B cell (primary cell): ENCODE measurements at regions of chr17 and their contacts with region 1.

Region 1: GRCh38 chr17:77088455-77089123 is 52.2 kb upstream of the SEC14L1 start:
- DNase-seq: peak; percentile 93
- ATAC-seq: peak; percentile 94
- H3K4me3 ChIP-seq: peak overlapping the region; percentile 69 to 99 (median 88)
- H3K4me3 Mint-ChIP-seq: peak overlapping the region; percentile 95
- H3K27ac ChIP-seq: peak overlapping the region; percentile 85 to 94
- H3K27ac Mint-ChIP-seq: peak overlapping the region; percentile 97
- H3K4me1 ChIP-seq: peaks cover 31 to 43% of the 10 kb centered on the region in 2 donors
- H3K4me1 Mint-ChIP-seq: peaks cover 44% of the 10 kb centered on the region
- H3K27me3 ChIP-seq: peaks cover 0 to 10% (median 0%) of the 10 kb centered on the region in 4 experiments
- H3K27me3 Mint-ChIP-seq: peaks cover 10% of the 10 kb centered on the region
- CTCF ChIP-seq: peak; percentile 75

Region 2: GRCh38 chr17:76737082-76737675 is 351.4 kb before region 1 on chr17 and contains the start of gene SRSF2:
- CTCF ChIA-PET with region 1: no interaction called
- POLR2A ChIA-PET with region 1: no interaction called
- intact Hi-C with region 1: loop called (anchors 1 kb)
- DNase-seq: peak; percentile 99
- ATAC-seq: peak; percentile 76
- H3K4me3 ChIP-seq: peak within 1 kb of the TSS; percentile 95 to 99 (median 97)
- H3K4me3 Mint-ChIP-seq: peak within 1 kb of the TSS; percentile 97
- H3K27ac ChIP-seq: peak within 1 kb of the TSS; percentile 95 to 97
- H3K27ac Mint-ChIP-seq: peak within 1 kb of the TSS; percentile 99
- H3K4me1 ChIP-seq: peaks cover 35 to 36% of the 10 kb centered on the region in 2 donors
- H3K4me1 Mint-ChIP-seq: peaks cover 53% of the 10 kb centered on the region
- H3K27me3 ChIP-seq: no peaks in the 10 kb centered on the region
- H3K27me3 Mint-ChIP-seq: no peaks in the 10 kb centered on the region
- CTCF ChIP-seq: no peak
- total RNA-seq, gene SRSF2: 356 and 362 TPM in 2 replicates

Region 3: DNA sequence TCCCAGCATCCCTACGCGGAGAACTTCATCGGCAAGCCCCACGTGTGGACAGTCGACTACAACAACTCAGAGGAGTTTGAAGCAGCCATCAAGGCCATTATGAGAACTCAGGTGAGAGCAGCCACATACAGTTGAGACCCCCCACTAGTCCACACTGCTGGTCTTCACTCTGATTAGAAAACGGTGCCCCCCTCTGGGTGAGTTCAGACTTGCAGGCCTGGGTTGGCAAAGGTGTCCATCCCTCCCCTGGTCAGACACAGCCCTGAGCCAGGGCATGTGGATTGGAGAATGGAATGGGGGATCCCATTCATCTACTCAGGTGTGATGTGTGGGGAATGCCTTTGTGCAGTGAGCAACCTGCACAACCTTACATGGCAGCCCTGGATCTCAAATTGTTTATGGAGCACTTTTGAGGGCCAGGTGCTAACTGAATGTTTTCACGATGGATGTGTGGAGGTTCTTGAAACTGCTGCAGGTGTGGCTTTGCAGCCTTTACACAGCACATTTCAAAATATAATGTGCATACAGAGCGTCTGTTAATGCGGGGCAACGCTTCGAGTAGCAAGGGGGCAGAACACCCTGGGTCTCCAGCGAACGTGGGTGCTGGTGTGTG is 147.7 kb before region 1 on chr17:
- CTCF ChIA-PET with region 1: no interaction called
- POLR2A ChIA-PET with region 1: no interaction called
- intact Hi-C with region 1: no loop called
- DNase-seq: no peak
- ATAC-seq: no peak
- H3K4me3 ChIP-seq: no peak overlapping the region
- H3K4me3 Mint-ChIP-seq: no peak overlapping the region
- H3K27ac ChIP-seq: no peak overlapping the region
- H3K27ac Mint-ChIP-seq: no peak overlapping the region
- H3K4me1 ChIP-seq: no peaks in the 10 kb centered on the region
- H3K4me1 Mint-ChIP-seq: no peaks in the 10 kb centered on the region
- H3K27me3 ChIP-seq: peaks cover 0 to 7% (median 1%) of the 10 kb centered on the region in 4 experiments
- H3K27me3 Mint-ChIP-seq: peaks cover 8% of the 10 kb centered on the region
- CTCF ChIP-seq: no peak

Region 4: DNA sequence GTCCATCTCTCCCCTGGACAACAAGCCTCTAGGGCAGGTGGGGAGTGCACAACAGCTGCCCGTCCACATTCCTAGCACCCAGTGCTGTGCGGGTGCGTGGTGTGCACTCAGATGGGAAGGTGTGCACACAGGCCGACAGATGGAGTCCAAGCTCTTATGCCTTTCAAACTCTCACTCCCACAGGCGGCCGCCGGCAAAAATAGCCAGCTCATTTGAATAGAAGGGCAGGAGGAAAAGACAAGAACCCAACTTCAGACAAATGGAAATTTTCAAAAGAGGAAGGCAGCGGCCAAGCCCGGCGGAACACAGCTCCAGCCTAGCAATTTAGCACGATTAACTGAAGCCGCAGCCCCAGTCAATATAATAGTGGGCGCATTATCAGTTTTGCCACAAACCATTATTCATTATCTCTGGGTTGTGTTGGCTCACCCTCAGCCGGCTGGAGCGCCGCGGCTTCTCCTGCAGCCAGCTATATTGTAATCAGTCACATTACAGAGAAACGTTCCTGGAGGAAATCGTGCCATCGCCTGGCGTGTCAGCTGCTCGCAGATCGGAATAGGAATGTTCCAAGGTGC is 51.7 kb before region 1 on chr17:
- CTCF ChIA-PET with region 1: no interaction called
- POLR2A ChIA-PET with region 1: no interaction called
- intact Hi-C with region 1: no loop called
- DNase-seq: peak; percentile 16
- ATAC-seq: peak; percentile 49
- H3K4me3 ChIP-seq: no peak overlapping the region
- H3K4me3 Mint-ChIP-seq: peak overlapping the region; percentile 4
- H3K27ac ChIP-seq: no peak overlapping the region
- H3K27ac Mint-ChIP-seq: no peak overlapping the region
- H3K4me1 ChIP-seq: peaks cover 14 to 16% of the 10 kb centered on the region in 2 donors
- H3K4me1 Mint-ChIP-seq: peaks cover 19% of the 10 kb centered on the region
- H3K27me3 ChIP-seq: peaks cover 0 to 20% (median 3%) of the 10 kb centered on the region in 4 experiments
- H3K27me3 Mint-ChIP-seq: peaks cover 39% of the 10 kb centered on the region
- CTCF ChIP-seq: no peak

Region 5: GRCh38 chr17:77109764-77110359 is 21.3 kb after region 1 on chr17:
- CTCF ChIA-PET with region 1: interaction called, 5 read pairs
- POLR2A ChIA-PET with region 1: no interaction called
- intact Hi-C with region 1: loop called (anchors 2 kb)
- DNase-seq: peak; percentile 58
- ATAC-seq: no peak
- H3K4me3 ChIP-seq: peak overlapping the region in 3 of 5 experiments; percentile 15 to 42 (median 18)
- H3K4me3 Mint-ChIP-seq: peak overlapping the region; percentile 78
- H3K27ac ChIP-seq: no peak overlapping the region
- H3K27ac Mint-ChIP-seq: peak overlapping the region; percentile 17
- H3K4me1 ChIP-seq: peaks cover 25 to 43% of the 10 kb centered on the region in 2 donors
- H3K4me1 Mint-ChIP-seq: peaks cover 47% of the 10 kb centered on the region
- H3K27me3 ChIP-seq: no peaks in the 10 kb centered on the region
- H3K27me3 Mint-ChIP-seq: no peaks in the 10 kb centered on the region
- CTCF ChIP-seq: no peak

Region 6: GRCh38 chr17:77214743-77215142 is 126.2 kb after region 1 on chr17:
- CTCF ChIA-PET with region 1: interaction called, 15 read pairs
- POLR2A ChIA-PET with region 1: no interaction called
- intact Hi-C with region 1: loop called (anchors 5 kb)
- DNase-seq: peak; percentile 24
- ATAC-seq: no peak
- H3K4me3 ChIP-seq: no peak overlapping the region
- H3K4me3 Mint-ChIP-seq: no peak overlapping the region
- H3K27ac ChIP-seq: no peak overlapping the region
- H3K27ac Mint-ChIP-seq: no peak overlapping the region
- H3K4me1 ChIP-seq: peaks cover 40 to 41% of the 10 kb centered on the region in 2 donors
- H3K4me1 Mint-ChIP-seq: peaks cover 53% of the 10 kb centered on the region
- H3K27me3 ChIP-seq: peaks cover 0 to 4% (median 0%) of the 10 kb centered on the region in 4 experiments
- H3K27me3 Mint-ChIP-seq: no peaks in the 10 kb centered on the region
- CTCF ChIP-seq: no peak

Region 7: DNA sequence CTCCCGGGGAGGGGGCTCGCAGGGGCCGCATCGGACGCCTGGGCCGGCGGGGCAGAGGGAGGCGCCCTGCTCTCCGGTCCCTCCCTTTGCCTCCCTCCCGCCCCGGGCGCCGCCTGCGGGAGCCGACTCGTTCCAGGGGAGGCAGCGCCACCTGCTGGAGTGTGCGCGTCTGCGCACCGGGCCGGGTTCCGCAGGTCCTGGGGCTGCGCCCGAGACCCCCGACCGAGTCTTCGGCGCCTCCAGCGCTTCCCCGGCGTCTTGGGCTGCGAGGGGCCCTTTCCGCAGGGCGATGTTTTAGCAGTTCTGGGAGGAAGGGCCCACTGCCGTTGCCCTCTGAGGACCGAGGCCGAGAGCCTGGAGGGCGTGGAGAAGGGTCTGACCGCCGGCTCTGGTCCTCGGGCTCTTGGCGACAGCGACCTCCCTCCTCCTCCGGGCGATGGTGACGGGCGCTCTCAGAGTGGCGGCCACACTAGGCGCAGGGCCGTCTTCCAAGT is 158.5 kb after region 1 on chr17:
- CTCF ChIA-PET with region 1: interaction called, 26 read pairs
- POLR2A ChIA-PET with region 1: no interaction called
- intact Hi-C with region 1: loop called (anchors 1 kb)
- DNase-seq: peak; percentile 89
- ATAC-seq: peak; percentile 98
- H3K4me3 ChIP-seq: peak overlapping the region in 4 of 5 experiments; percentile 32 to 54 (median 48)
- H3K4me3 Mint-ChIP-seq: peak overlapping the region; percentile 71
- H3K27ac ChIP-seq: no peak overlapping the region
- H3K27ac Mint-ChIP-seq: no peak overlapping the region
- H3K4me1 ChIP-seq: peaks cover 9 to 10% of the 10 kb centered on the region in 2 donors
- H3K4me1 Mint-ChIP-seq: peaks cover 16% of the 10 kb centered on the region
- H3K27me3 ChIP-seq: peaks cover 0 to 20% (median 2%) of the 10 kb centered on the region in 4 experiments
- H3K27me3 Mint-ChIP-seq: peaks cover 41% of the 10 kb centered on the region
- CTCF ChIP-seq: peak; percentile 98

Region 8: DNA sequence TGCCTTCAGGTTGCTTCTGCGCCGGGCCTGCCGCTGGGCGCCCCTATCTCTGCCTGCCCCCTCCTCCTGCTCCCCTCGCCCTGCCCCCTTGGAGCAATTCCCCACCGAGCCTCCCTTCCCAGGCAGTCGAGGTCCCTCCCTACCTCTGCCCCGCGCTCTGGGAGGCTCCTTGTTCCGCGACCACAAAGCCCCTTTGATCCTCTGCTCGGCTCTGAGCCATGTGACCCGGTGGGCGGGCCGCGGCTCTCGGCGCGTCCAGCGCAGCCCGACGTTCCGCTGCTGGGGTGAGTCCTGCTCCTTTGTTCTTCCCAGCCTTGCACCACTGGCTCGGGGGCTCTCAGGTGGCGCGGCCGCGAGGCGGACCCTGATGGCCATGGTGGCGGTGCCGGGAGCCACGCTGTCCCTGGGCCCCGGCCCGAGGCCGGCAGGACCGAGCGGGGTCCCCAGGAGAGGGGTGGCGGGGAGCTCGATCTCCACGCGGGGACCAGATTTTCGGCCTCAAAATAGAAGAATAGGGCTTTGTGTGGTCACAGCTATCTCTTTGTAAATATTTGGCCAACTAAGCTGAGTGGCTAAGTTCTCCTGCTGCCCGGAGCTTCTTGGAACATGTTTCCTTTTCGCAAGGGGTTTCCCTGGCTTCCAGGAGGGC is 362.8 kb after region 1 on chr17:
- CTCF ChIA-PET with region 1: no interaction called
- POLR2A ChIA-PET with region 1: no interaction called
- intact Hi-C with region 1: loop called (anchors 10 kb)
- DNase-seq: peak; percentile 70
- ATAC-seq: peak; percentile 59
- H3K4me3 ChIP-seq: peak overlapping the region; percentile 91 to 96 (median 92)
- H3K4me3 Mint-ChIP-seq: peak overlapping the region; percentile 93
- H3K27ac ChIP-seq: peak overlapping the region; percentile 66 to 96
- H3K27ac Mint-ChIP-seq: peak overlapping the region; percentile 96
- H3K4me1 ChIP-seq: peaks cover 67 to 86% of the 10 kb centered on the region in 2 donors
- H3K4me1 Mint-ChIP-seq: peaks cover 69% of the 10 kb centered on the region
- H3K27me3 ChIP-seq: no peaks in the 10 kb centered on the region
- H3K27me3 Mint-ChIP-seq: no peaks in the 10 kb centered on the region
- CTCF ChIP-seq: no peak